WTC11 (cell line): ENCODE measurements at regions of chr17 and their contacts with region 1.

Region 1: GRCh38 chr17:76681222-76682137 is 29.3 kb downstream of the MXRA7 start:
- DNase-seq: peak; percentile 89
- ATAC-seq: peak; percentile 85
- H3K4me3 Mint-ChIP-seq: no peak overlapping the region
- H3K27ac Mint-ChIP-seq: no peak overlapping the region
- H3K4me1 Mint-ChIP-seq: peaks cover 4% of the 10 kb centered on the region
- H3K27me3 Mint-ChIP-seq: no peaks in the 10 kb centered on the region
- CTCF ChIP-seq: peak; percentile 48; the same call in 1 of the 2 replicates

Region 2: DNA sequence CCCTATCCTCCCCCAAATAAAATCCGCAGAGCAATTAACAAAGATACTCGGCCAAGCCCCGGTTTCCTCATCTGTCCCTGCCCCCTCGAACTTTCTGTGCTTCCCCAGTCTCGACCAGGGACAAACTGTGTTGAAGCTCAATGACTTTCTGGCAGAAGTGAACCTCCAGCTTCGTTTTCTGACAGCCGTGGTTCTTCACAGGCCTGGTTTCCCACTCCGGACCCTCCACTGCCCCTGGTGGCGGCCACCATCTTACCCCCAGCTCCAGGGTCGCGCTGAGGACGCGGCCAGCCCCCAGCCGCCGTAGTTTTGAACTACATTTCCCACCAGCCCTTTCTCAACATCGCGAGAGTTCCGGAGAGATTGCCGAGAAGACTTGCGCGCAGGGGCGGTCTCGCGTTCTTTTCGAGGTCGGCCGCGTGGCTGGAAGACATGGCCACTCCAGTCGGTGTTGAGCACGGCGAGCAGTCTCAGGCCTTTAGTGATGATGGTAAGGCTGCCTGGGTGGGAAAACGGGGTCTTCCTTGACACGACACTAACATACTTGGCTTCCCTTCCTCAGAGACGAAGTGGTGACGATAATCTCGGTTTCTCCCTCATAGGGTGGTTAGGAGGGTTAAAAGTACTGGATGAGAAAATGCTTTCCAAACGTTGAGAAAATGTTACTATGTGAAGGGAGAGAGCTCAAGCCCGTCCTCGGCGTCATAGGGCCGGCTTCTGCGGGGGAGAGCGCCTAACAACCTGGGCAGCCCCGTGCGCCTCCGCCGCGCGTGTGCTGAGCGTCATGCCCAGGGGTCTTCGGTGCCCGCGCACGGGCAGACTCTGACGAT is 123.9 kb before region 1 on chr17:
- CTCF ChIA-PET with region 1: interaction called, 17 read pairs
- POLR2A ChIA-PET with region 1: no interaction called
- DNase-seq: peak; percentile 97
- ATAC-seq: peak; percentile 97
- H3K4me3 Mint-ChIP-seq: peak overlapping the region; percentile 97
- H3K27ac Mint-ChIP-seq: peak overlapping the region; percentile 97
- H3K4me1 Mint-ChIP-seq: peaks cover 43% of the 10 kb centered on the region
- H3K27me3 Mint-ChIP-seq: no peaks in the 10 kb centered on the region
- CTCF ChIP-seq: peak; percentile 31; the same call in 1 of the 2 replicates

Region 3: GRCh38 chr17:76612977-76613851 is 68.3 kb before region 1 on chr17:
- CTCF ChIA-PET with region 1: interaction called, 13 read pairs
- POLR2A ChIA-PET with region 1: no interaction called
- DNase-seq: peak; percentile 54
- ATAC-seq: peak; percentile 99
- H3K4me3 Mint-ChIP-seq: no peak overlapping the region
- H3K27ac Mint-ChIP-seq: peak overlapping the region; percentile 3; the same call in 1 of the 2 replicates
- H3K4me1 Mint-ChIP-seq: 0 out of 2 replicates have a peak, but pooled peaks cover 4% of the 10 kb centered on the region
- H3K27me3 Mint-ChIP-seq: peaks cover 21% of the 10 kb centered on the region
- CTCF ChIP-seq: no peak

Region 4: DNA sequence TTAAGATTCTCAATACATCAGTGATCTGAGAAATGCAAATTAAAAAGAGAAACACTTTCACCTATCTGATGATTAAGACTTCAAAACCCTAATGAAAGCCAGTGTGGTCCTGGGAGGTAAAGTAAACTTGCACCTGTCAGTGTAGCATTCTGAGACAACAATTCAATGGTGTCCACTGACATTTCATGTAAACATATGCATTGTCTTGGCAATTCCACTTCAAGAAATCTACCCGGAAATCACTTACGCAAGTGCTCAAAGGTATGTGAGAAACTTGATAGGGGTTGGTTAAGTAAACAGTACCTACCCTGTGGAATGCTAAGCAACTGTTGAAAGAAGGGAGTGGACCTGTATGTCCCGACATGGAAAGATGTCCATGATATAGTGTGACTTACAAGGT is 40.0 kb before region 1 on chr17:
- CTCF ChIA-PET with region 1: interaction called, 11 read pairs
- POLR2A ChIA-PET with region 1: no interaction called
- DNase-seq: no peak
- ATAC-seq: no peak
- H3K4me3 Mint-ChIP-seq: no peak overlapping the region
- H3K27ac Mint-ChIP-seq: no peak overlapping the region
- H3K4me1 Mint-ChIP-seq: peaks cover 14% of the 10 kb centered on the region
- H3K27me3 Mint-ChIP-seq: no peaks in the 10 kb centered on the region; the same call in 1 of the 2 replicates
- CTCF ChIP-seq: no peak

Region 5: DNA sequence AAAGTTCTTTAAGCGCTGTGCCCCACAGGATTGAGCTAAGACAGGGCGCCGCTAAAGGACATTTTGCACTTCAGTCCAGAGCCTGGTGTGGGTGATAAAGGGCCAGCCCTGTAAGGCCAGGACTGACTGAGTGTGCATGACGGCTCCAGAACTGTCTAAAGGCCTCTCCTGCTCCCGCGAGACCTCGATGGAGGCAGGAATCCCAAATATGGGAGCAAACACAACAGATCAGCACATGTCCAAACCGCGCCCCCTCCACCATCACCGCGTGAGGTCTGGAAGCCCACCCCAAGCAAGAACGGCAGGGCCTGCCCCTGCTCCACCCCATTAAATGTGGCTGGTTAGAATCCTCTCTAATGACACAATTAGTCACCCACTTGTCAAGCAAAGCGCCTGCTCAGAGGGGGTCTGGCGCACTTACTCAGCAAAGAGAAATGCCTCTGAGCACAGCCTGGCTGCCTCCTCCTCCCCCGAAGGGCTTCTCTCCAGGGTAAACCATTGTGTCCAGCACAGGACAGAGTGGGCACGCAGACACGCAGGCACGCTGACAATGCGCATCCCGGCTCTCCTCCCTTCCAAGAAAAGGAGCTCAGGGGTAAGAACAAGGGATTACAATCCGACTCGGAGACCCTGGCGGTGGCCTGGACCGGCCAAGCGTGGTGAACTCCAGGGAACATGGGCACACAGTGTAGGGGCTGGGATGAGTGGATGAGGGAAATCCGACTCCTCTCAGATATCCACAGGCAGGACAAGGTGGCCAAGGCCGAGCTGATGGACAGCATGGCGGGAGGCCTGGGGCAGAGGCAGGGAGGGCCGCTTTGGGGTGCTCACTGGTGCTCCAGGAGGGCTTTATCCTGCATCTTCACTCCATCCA is 27.8 kb after region 1 on chr17:
- CTCF ChIA-PET with region 1: interaction called, 52 read pairs
- POLR2A ChIA-PET with region 1: no interaction called
- DNase-seq: no peak
- ATAC-seq: no peak
- H3K4me3 Mint-ChIP-seq: peak overlapping the region; percentile 74
- H3K27ac Mint-ChIP-seq: no peak overlapping the region
- H3K4me1 Mint-ChIP-seq: peaks cover 34% of the 10 kb centered on the region
- H3K27me3 Mint-ChIP-seq: peaks cover 15% of the 10 kb centered on the region
- CTCF ChIP-seq: no peak